GM10248 (cell line): ENCODE measurements at regions of chr20 and their contacts with region 1.

Region 1: DNA sequence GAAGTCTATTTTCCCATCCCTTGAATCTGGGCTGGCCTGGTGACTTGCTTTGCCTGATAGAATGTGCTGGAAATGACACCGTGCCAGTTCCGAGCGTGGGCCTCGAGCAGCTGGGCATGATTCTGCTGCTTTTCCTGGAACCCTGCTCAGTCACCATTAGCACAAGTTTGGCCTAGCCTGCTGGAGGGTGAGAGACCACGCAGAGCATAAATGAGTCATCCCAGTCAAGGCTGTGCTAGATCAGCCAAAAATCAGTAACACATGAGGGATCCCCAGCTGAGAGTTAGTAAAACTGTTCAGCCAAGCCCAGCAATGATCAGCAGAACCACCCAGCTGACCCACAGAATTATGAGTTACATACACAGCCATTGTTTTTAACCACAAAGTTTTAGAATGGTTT is 74.8 kb upstream of the TOP1 start:
- DNase-seq: no peak
- CTCF ChIP-seq: no peak

Region 2: GRCh38 chr20:40908309-40908708 is 45.5 kb before region 1 on chr20:
- CTCF ChIA-PET with region 1: no interaction called
- POLR2A ChIA-PET with region 1: no interaction called
- DNase-seq: no peak
- CTCF ChIP-seq: no peak

Region 3: GRCh38 chr20:40941133-40941610 is 12.7 kb before region 1 on chr20:
- CTCF ChIA-PET with region 1: interaction called, 12 read pairs
- POLR2A ChIA-PET with region 1: no interaction called
- DNase-seq: no peak
- CTCF ChIP-seq: no peak

Region 4: GRCh38 chr20:40993794-40994548 is 40.1 kb after region 1 on chr20:
- CTCF ChIA-PET with region 1: no interaction called
- POLR2A ChIA-PET with region 1: no interaction called
- DNase-seq: no peak
- CTCF ChIP-seq: no peak

Region 5: GRCh38 chr20:41222296-41222695 is 268.4 kb after region 1 on chr20:
- CTCF ChIA-PET with region 1: no interaction called
- POLR2A ChIA-PET with region 1: no interaction called
- DNase-seq: no peak
- CTCF ChIP-seq: no peak